ENCODE measurements at regions of chr4 and their contacts with region 1.

Region 1: DNA sequence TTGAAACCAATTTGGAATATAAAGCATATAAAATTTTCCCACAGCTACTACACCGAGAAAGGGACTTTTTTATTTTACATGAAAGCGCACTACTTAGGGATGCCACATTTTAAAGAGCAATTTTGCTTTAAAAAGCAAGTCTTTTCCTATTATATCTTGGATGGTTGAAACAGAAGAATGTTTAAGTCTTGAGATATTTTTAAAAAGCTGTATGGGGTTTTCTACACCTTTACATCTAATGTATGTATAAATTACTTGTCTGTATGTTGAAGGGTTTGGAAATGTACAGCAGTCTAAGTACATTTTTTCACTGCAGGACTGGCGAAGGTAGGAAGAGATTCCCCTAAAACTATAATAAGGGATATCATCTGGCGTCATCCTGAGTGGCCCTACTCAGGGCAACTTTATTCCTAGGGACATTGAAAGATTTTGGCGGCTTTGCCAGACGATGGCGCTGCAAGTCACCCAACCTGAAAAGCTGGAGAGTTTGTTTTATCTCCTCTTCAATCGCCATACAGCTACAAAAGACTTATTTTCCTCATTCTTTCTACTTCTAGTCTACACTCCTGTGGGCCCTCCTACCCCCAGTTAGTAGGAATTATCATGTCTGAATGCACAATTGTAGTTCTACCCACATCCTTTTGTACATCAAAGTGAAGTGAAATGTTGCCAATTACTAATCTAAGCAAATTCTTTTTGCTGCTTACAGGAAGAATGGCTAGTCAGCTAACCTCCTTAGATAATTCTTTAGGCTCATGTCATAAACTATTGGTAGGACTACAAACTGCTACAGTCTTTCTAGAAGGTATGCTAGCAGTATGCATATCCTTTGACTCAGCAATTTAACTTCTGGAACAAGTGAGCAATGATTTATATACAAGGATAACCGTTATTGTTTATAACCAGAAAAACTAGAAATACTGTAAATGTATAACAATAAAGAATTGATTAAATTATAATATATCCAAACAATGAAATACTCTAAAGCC is 782 bp upstream of the NEK1 start:
- DNase-seq: peak; percentile 72 to 91 (median 83)

Region 2: GRCh38 chr4:169659716-169660670 is 46.8 kb after region 1 on chr4:
- intact Hi-C with region 1: loop called (anchors 5 kb)
- DNase-seq: peak in 41 of 42 donors; percentile 26 to 93 (median 69)

Region 3: GRCh38 chr4:169881769-169882168 is 268.6 kb after region 1 on chr4:
- intact Hi-C with region 1: no loop called
- DNase-seq: no peak

Measured in head of caudate nucleus (tissue), 42 donors.